GM10248 (cell line): ENCODE measurements at regions of chr1 and their contacts with region 1.

Region 1: DNA sequence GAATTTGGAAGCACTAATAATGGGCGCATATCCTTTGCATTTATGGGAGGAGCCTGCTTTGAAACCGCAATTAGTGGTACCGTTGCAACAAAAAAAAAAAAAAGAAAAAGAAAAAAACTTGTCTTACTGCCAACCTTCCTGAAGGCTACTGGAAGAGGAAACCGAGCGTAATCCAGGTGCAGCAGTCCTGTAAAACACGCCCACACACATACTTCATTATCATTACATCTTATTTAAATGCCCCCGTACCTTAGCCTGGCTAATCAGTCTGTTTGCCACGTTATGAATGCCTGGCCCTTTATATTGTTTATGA is 686 bp upstream of the ZNF281 start:
- DNase-seq: no peak
- CTCF ChIP-seq: no peak

Region 2: DNA sequence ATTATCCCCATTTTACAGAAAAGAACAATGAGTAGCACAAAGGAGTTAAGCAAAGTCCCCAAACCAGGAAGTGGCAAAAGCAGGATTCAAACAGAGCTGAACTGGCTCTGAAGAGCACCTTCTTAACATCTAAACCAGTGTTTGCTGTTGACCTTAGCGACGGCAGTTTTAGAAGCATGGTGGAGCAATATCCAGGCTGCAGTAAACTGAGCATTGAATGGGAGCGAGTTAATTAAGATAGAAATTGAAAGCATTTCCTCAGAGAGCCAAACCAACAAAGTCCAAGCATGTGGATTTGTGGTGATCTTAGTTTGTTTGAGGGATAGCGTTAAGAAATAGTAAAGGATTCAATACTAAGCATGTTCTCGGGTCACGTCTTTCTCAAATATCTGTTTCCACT is 12.7 kb after region 1 on chr1:
- CTCF ChIA-PET with region 1: interaction called, 11 read pairs
- POLR2A ChIA-PET with region 1: no interaction called
- DNase-seq: no peak
- CTCF ChIP-seq: no peak